RWPE1 (cell line): ENCODE measurements at regions of chr1 and their contacts with region 1.

Region 1: DNA sequence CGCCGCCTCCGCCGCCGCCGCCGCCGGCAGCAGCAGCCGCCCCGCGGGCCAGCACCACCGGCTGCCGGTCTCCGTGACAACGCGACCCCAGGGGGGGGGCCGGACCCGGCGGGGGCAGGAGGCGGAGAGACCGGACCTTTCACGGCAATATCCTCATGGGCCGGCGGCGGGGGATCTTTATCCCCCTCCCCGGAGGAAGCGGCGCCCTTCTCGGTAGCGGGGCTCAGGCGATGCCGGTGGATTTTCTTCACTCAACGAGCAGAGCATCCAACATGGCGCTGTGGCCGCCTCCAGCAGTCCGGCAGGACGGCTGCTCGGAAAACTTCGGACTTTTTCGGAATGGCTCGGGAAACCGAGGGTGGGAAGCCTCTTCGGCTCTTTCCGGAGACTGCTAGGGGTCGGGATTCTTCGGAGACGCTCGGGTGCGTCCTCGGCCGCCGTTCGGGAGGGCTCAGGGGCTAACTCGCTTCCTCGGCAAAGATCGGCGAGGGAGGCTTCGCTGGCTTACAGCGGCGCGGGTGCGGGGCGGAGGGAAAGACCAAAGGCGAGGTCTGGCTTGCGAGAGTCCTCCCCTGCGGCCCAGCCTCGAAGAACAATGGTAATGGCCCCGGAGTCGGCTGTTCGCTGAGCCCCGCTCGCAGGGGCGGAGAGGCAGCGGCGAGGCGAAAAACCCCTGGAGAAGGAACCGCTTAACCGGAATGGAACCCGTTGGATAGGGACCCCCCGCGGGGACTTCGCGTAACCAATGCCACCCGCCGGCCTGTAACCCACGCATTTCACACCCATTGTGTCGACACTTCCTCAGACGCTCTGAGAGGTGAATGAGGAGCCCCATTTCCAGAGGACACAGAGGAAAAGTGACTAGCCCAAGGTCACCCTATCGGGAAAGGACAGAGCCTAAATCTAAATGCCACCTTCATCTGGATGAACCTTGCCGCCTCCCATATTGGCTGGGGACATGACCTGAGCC is at the start of gene EIF4G3:
- DNase-seq: peak; percentile 98
- H3K27ac ChIP-seq: peak within 1 kb of the TSS; percentile 96
- CTCF ChIP-seq: no peak

Region 2: GRCh38 chr1:21058035-21058793 is 118.7 kb before region 1 on chr1:
- CTCF ChIA-PET with region 1: no interaction called
- POLR2A ChIA-PET with region 1: no interaction called
- DNase-seq: no peak
- H3K27ac ChIP-seq: no peak overlapping the region
- CTCF ChIP-seq: no peak

Region 3: DNA sequence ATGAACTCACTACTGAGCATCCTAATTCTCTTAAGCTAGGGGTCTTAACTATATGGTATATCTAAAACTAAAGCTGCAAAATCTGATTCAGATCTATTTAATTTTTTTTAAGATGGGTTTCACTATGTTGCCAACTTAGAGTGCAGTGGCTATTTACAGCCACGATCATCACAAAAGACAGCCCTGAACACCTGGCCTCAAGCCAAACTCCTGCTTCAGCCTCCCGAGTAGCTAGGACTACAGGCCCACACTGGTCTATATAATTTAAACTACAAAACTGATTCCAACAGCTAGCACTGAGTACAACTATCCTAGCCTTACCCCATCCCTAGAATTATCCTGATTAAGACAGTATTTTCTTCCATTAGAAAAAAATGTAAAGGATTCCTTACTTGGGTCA is 37.3 kb before region 1 on chr1:
- CTCF ChIA-PET with region 1: no interaction called
- POLR2A ChIA-PET with region 1: no interaction called
- DNase-seq: no peak
- H3K27ac ChIP-seq: no peak overlapping the region
- CTCF ChIP-seq: no peak

Region 4: DNA sequence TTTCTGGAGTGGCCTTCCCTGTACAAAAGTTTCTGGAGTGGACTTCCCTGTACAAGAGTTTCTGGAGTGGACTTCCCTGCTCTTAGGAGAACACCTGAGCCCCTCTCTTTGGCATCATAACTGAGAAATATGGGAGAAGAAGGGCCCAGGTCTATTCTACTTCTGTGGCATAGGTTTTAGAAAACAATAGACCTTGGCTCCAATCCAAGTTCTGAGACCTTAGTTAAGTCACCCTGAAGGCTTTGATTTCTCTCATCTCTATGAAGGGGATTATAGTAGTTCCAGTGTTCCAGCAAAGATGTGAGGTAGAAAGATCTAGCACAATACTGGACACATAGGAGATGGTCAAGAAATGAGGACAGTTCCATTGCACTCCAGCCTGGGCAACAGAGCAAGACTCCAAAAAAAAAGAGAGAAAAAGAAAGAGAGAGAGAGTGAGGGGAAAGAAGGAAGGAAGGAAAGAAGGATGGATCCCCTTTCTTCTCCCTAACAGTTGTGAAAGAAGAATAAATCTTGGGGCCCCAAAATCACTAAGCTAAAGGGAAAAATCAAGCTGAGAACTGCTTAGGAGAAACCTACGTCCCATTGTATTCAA is 13.1 kb after region 1 on chr1:
- CTCF ChIA-PET with region 1: no interaction called
- POLR2A ChIA-PET with region 1: interaction called, 10 read pairs
- DNase-seq: no peak
- H3K27ac ChIP-seq: peak overlapping the region; percentile 61
- CTCF ChIP-seq: no peak